H1 (cell line): ENCODE measurements at regions of chr15 and their contacts with region 1.

Region 1: DNA sequence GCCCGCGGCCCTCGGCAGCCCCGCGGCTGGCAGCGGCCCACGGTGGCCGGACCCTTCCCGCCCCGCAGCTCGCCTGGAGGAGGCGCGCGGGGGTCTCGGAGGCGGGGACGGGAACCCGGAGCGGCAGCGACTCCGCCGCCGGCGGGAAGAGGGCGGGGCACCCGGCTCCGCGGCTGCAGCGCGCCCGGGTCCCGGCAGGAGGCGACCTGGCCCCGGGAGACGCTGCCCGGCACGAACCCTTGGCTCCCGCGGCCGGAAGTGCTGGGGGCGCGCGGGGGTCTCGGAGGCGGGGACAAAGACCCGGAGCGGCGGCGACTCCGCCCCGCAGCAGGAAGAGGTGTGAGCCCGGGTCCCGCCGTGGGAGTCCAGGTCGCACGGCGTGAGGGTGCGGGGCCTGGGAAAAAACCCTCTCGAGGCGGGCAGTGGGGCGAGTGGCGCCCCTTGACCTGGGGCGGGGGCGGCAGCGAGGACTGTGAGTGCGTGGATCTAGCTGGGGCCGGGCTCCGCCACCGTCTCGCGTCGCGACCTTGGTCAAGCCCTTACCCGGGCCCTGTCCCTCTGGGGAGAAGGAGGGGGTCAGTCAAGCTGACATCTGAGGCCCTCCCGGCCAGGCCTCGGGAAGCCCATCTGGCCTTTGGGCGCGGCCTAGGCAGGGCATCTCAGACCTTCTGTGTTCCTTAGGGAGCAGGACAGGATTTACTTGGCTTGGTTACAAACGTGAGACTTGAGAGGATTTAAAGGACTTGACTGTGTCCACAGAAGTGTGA is at the start of gene CIB2:
- DNase-seq: peak in 1 of 2 experiments; percentile 91
- H3K4me3 ChIP-seq: peak within 1 kb of the TSS; percentile 66 to 81 (median 80)
- H3K27ac ChIP-seq: no peak within 1 kb of the TSS
- H3K4me1 ChIP-seq: peaks cover 0 to 21% (median 14%) of the 10 kb centered on the region in 4 experiments; a peak in 6 of 7 replicates
- H3K27me3 ChIP-seq: no peaks in the 10 kb centered on the region; a peak in 1 of 7 replicates
- CTCF ChIP-seq: peak; percentile 48 to 82 (median 57)
- EP300 ChIP-seq: 0 out of 3 replicates have a peak, but pooled peaks of 1 of the 2 experiments have one; percentile 26
- POLR2A ChIP-seq: no peak; a peak in 1 of 3 replicates
- RAD21 ChIP-seq: peak; percentile 55 to 69
- total RNA-seq, gene CIB2: 45.8 and 46.8 TPM in 2 replicates

Region 2: DNA sequence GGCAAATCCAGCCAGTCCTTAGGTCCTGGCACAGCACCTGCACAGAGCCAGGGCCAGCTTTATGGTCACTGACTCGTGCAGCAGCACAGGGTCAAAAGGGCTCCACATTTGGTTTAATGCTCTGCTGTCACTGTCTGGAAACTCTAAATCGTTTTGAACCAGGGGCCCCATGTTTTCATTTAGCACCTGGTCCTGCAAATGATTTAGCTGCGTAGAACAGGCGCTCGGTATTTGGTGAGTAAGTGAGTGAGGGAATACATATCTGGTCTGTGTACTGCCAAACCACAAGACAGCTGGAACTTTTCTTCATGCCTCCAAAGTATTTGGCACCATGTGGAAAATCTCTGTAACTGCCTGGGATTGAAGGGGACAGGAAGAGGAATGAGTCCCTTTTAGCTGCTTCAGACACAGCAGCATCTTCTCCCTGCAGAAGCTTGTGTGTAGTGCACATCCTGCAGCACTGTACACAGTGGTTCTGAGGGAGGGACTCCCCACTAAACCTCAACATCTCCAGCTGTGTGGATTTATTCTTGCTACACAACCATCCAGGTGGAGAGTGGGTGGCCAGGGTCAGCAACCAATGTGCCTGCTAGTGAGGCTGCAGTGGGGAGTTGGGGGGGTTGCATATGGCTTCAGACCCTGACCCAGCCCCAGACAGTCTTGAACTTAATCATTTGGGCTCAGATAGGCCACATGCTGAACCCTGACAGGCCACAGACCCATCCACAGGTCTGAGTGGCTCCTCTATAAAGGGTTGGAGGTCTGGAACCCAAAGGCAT is 38.0 kb before region 1 on chr15:
- CTCF ChIA-PET with region 1: no interaction called
- POLR2A ChIA-PET with region 1: no interaction called
- DNase-seq: no peak
- H3K4me3 ChIP-seq: no peak overlapping the region
- H3K27ac ChIP-seq: no peak overlapping the region
- H3K4me1 ChIP-seq: 0 out of 7 replicates have a peak, but pooled peaks cover 0 to 3% (median 0%) of the 10 kb centered on the region in 4 experiments
- H3K27me3 ChIP-seq: peaks cover 0 to 14% (median 7%) of the 10 kb centered on the region in 4 experiments; a peak in 3 of 7 replicates
- CTCF ChIP-seq: no peak
- EP300 ChIP-seq: no peak
- POLR2A ChIP-seq: no peak
- RAD21 ChIP-seq: no peak

Region 3: GRCh38 chr15:78120523-78120922 is 11.0 kb before region 1 on chr15:
- CTCF ChIA-PET with region 1: interaction called, 23 read pairs
- POLR2A ChIA-PET with region 1: interaction called, 9 read pairs
- DNase-seq: peak in 1 of 2 experiments; percentile 52
- H3K4me3 ChIP-seq: peak overlapping the region in 1 of 4 experiments; percentile 1; a peak in 3 of 8 replicates
- H3K27ac ChIP-seq: peak overlapping the region; percentile 32; the same call in 1 of the 2 replicates
- H3K4me1 ChIP-seq: peaks cover 0 to 11% (median 9%) of the 10 kb centered on the region in 4 experiments; a peak in 6 of 7 replicates
- H3K27me3 ChIP-seq: no peaks in the 10 kb centered on the region
- CTCF ChIP-seq: no peak
- EP300 ChIP-seq: no peak
- POLR2A ChIP-seq: no peak
- RAD21 ChIP-seq: no peak

Region 4: DNA sequence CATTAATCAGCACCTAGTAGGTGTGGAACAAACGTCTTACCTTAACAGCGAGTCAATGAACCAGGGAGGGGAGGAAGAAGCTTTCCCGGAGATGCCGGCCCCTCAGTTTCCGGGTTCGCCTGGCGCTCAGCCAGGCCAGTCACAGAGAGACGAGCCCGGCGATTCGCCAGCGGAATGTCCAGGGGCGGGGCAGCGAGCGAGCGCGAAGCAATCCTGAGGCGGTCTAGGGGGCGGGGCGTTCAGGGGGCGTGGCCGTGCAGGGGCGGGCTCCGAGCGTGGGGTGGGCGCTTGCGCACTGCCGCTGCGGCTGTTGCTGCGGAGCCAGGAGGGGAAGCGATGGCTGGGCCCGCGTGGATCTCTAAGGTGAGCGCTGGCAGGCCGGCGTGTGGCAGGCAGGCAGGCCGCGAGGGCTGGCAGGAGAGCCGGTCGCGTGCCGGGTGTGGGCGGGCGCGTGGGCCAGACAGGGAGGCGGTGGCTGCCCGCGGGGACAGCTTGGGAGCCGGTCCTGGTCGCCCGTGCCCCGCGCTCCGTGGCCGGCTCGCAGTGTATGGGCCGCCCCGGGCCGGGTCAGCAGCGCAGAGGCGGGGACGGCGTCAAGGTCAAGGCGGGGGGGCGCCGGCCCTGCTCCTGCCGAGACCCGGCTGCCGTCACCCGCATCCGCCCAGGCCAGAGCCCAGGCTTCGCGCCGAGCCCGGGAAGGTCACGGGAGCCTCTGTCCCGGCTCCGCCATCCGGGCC is 17.8 kb after region 1 on chr15 and contains the start of gene IDH3A:
- CTCF ChIA-PET with region 1: interaction called, 13 read pairs
- POLR2A ChIA-PET with region 1: no interaction called
- DNase-seq: peak; percentile 84 to 100
- H3K4me3 ChIP-seq: peak within 1 kb of the TSS; percentile 47 to 79 (median 61)
- H3K27ac ChIP-seq: no peak within 1 kb of the TSS
- H3K4me1 ChIP-seq: peaks cover 0 to 4% (median 0%) of the 10 kb centered on the region in 4 experiments; a peak in 2 of 7 replicates
- H3K27me3 ChIP-seq: no peaks in the 10 kb centered on the region; a peak in 1 of 7 replicates
- CTCF ChIP-seq: no peak
- EP300 ChIP-seq: no peak
- POLR2A ChIP-seq: peak; percentile 17 to 76
- RAD21 ChIP-seq: no peak
- total RNA-seq, gene IDH3A: 36.8 and 41.5 TPM in 2 replicates

Region 5: GRCh38 chr15:78264304-78265136 is 133.0 kb after region 1 on chr15 and contains the start of gene DNAJA4:
- CTCF ChIA-PET with region 1: no interaction called
- POLR2A ChIA-PET with region 1: no interaction called
- DNase-seq: peak in 1 of 2 experiments; percentile 68
- H3K4me3 ChIP-seq: peak within 1 kb of the TSS; percentile 29 to 59 (median 32)
- H3K27ac ChIP-seq: no peak within 1 kb of the TSS
- H3K4me1 ChIP-seq: 0 out of 7 replicates have a peak, but pooled peaks cover 0 to 3% (median 0%) of the 10 kb centered on the region in 4 experiments
- H3K27me3 ChIP-seq: peaks cover 0 to 19% (median 10%) of the 10 kb centered on the region in 4 experiments; a peak in 4 of 7 replicates
- CTCF ChIP-seq: peak in 1 of 3 experiments; percentile 2; a peak in 1 of 4 replicates
- EP300 ChIP-seq: no peak
- POLR2A ChIP-seq: no peak
- RAD21 ChIP-seq: no peak
- total RNA-seq, gene DNAJA4: 2.5 and 3.6 TPM in 2 replicates